Mammary epithelial cell (primary cell): ENCODE measurements at regions of chr6 and their contacts with region 1.

Region 1: GRCh38 chr6:29414588-29414987 is at the start of gene OR12D1:
- DNase-seq: peak; percentile 65
- H3K4me3 ChIP-seq: no peak within 1 kb of the TSS
- H3K27ac ChIP-seq: no peak within 1 kb of the TSS
- H3K4me1 ChIP-seq: no peaks in the 10 kb centered on the region
- H3K27me3 ChIP-seq: peaks cover 4% of the 10 kb centered on the region
- CTCF ChIP-seq: peak; percentile 55 to 79
- total RNA-seq, gene OR12D1: not detected

Region 2: DNA sequence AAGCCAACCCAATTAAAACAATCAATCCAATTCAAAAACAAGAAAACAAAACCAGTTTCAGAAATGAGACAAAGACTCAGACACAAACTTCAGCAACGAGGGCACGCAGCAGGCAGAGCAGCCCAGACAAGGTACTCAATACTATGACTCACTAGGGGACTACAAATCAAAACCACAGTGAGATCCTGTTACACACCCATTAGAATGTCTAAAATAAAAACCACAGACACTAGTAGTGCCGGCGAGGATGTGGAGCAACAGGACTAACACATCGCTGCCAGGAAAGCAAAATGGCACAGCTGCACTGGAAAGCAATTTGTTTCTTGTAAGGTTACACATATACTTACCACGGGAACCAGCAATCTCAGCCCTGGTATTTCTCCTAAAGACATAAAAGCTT is 101.5 kb after region 1 on chr6:
- CTCF ChIA-PET with region 1: no interaction called
- dilution Hi-C with region 1: no loop called
- in situ Hi-C with region 1: no loop called
- intact Hi-C with region 1: loop called (anchors 2 kb)
- DNase-seq: peak; percentile 93
- H3K4me3 ChIP-seq: no peak overlapping the region
- H3K27ac ChIP-seq: no peak overlapping the region
- H3K4me1 ChIP-seq: no peaks in the 10 kb centered on the region
- H3K27me3 ChIP-seq: no peaks in the 10 kb centered on the region
- CTCF ChIP-seq: no peak